ENCODE measurements at regions of chr5 and their contacts with region 1.

Region 1: GRCh38 chr5:61933787-61934626 is 372.0 kb upstream of the KIF2A start:
- DNase-seq: peak; percentile 69
- H3K4me3 ChIP-seq: no peak overlapping the region
- H3K27ac ChIP-seq: no peak overlapping the region
- H3K4me1 ChIP-seq: peaks cover 28% of the 10 kb centered on the region
- H3K27me3 ChIP-seq: no peaks in the 10 kb centered on the region
- CTCF ChIP-seq: peak; percentile 81 to 85

Region 2: DNA sequence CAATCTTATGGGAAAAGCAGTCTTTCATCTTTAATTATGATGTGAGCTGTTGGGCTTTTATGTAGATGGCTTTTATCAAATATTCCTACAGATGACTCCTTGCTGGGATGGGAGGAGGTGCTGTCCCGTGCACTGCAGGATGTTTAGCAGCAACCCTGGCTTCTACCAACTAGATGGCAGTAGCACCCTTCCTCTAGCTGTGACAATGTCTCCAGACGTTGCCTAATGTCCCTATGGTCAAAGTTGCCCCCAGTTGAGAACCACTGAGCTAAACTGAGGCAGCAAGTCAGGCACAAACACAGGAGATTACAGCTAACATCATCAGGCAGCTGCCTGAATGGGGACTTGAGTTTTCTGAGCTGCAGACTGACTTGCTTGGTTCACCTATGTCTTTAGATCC is 1638.6 kb before region 1 on chr5:
- CTCF ChIA-PET with region 1: no interaction called
- dilution Hi-C with region 1: no loop called
- in situ Hi-C with region 1: no loop called
- intact Hi-C with region 1: loop called (anchors 5 kb)
- DNase-seq: peak; percentile 27
- H3K4me3 ChIP-seq: no peak overlapping the region
- H3K27ac ChIP-seq: no peak overlapping the region
- H3K4me1 ChIP-seq: no peaks in the 10 kb centered on the region
- H3K27me3 ChIP-seq: no peaks in the 10 kb centered on the region
- CTCF ChIP-seq: peak; percentile 69 to 91

Region 3: GRCh38 chr5:60960591-60960990 is 973.4 kb before region 1 on chr5:
- CTCF ChIA-PET with region 1: interaction called, 4 read pairs
- dilution Hi-C with region 1: no loop called
- in situ Hi-C with region 1: loop called in 1 of 2 experiments (anchors 25 kb)
- intact Hi-C with region 1: loop called (anchors 1 kb)
- DNase-seq: no peak
- H3K4me3 ChIP-seq: no peak overlapping the region
- H3K27ac ChIP-seq: no peak overlapping the region
- H3K4me1 ChIP-seq: no peaks in the 10 kb centered on the region
- H3K27me3 ChIP-seq: no peaks in the 10 kb centered on the region
- CTCF ChIP-seq: peak; percentile 51 to 56

Region 4: DNA sequence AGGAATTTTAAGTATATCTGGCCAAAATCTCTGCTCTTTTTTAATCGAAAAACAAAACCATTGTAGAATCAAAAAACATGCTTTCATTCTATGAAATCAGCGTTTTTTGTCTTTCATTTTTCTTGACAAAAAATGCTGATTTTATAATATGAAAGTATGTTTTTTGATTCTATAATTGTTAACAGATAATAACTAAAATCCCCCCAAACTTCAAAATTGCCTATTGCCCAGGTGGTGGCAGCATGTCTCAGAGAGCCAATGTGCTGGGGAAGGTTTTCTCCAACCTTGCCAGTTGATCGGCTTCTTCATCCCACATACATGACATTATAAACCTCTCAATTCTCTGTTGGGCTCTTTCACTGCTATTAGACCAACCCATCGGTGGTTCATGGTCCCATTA is 766.6 kb before region 1 on chr5:
- CTCF ChIA-PET with region 1: no interaction called
- dilution Hi-C with region 1: no loop called
- in situ Hi-C with region 1: loop called in 1 of 2 experiments (anchors 25 kb)
- intact Hi-C with region 1: loop called (anchors 2 kb)
- DNase-seq: peak; percentile 32
- H3K4me3 ChIP-seq: no peak overlapping the region
- H3K27ac ChIP-seq: no peak overlapping the region
- H3K4me1 ChIP-seq: peaks cover 5% of the 10 kb centered on the region
- H3K27me3 ChIP-seq: no peaks in the 10 kb centered on the region
- CTCF ChIP-seq: peak; percentile 40 to 62

Region 5: DNA sequence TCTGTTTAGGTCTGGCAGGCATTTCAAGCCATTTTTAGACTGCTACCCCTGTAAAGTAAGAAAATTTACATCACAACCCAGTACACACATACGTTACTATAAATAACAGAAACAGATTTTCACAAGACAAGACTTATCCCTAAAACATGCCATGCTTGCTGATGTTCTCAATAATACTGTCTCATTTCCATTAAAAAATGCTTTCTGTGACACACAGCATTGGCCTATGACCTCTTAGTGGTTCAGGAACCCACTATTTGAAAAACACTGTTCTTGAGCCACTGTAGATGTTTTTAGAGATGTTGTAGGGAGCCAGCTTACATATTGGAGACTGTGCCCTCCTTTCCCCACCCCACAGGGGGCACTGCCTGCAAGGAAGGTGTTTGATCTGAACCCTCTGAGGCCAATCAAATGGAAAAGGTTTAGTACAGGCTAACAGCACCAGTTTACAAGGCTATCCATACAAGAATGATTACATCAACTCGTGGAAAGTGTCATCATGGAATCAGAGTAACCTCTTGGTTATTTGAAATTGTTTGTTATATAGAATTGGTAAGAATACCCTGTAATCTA is 571.1 kb before region 1 on chr5:
- CTCF ChIA-PET with region 1: no interaction called
- dilution Hi-C with region 1: no loop called
- in situ Hi-C with region 1: no loop called
- intact Hi-C with region 1: loop called (anchors 10 kb)
- DNase-seq: no peak
- H3K4me3 ChIP-seq: no peak overlapping the region
- H3K27ac ChIP-seq: no peak overlapping the region
- H3K4me1 ChIP-seq: no peaks in the 10 kb centered on the region
- H3K27me3 ChIP-seq: no peaks in the 10 kb centered on the region
- CTCF ChIP-seq: peak in 1 of 2 donors; percentile 37

Region 6: GRCh38 chr5:61586096-61587084 is 347.6 kb before region 1 on chr5:
- CTCF ChIA-PET with region 1: no interaction called
- dilution Hi-C with region 1: no loop called
- in situ Hi-C with region 1: no loop called
- intact Hi-C with region 1: no loop called
- DNase-seq: no peak
- H3K4me3 ChIP-seq: no peak overlapping the region
- H3K27ac ChIP-seq: no peak overlapping the region
- H3K4me1 ChIP-seq: no peaks in the 10 kb centered on the region
- H3K27me3 ChIP-seq: no peaks in the 10 kb centered on the region
- CTCF ChIP-seq: no peak

Region 7: GRCh38 chr5:61817472-61818326 is 116.3 kb before region 1 on chr5:
- CTCF ChIA-PET with region 1: no interaction called
- dilution Hi-C with region 1: no loop called
- in situ Hi-C with region 1: no loop called
- intact Hi-C with region 1: loop called (anchors 5 kb)
- DNase-seq: peak; percentile 46
- H3K4me3 ChIP-seq: no peak overlapping the region
- H3K27ac ChIP-seq: no peak overlapping the region
- H3K4me1 ChIP-seq: no peaks in the 10 kb centered on the region
- H3K27me3 ChIP-seq: no peaks in the 10 kb centered on the region
- CTCF ChIP-seq: peak; percentile 76 to 84

Measured in mammary epithelial cell (primary cell).